ENCODE measurements at regions of chr1 and their contacts with region 1.

Region 1: DNA sequence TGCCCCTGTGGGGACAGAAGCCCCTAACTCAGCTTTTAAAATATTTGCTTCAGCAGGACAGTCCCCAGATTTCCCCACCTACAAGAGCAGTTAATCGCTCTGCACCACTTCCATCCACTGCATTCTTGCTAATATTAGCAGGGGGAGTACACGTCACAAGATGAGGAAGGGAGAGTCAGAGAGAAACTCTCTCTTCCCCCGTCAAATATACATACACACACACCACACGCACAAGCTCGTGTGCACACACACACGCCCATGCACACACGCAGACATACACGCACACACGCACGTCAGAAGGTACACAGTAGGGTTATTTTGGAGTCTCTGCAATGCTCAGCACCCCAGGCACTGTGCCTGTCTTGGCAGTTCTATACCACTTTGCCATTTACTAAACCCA is 2.1 kb downstream of the CLCA1 start:
- DNase-seq: no peak
- H3K4me3 Mint-ChIP-seq: no peak overlapping the region
- H3K27ac Mint-ChIP-seq: no peak overlapping the region
- H3K4me1 Mint-ChIP-seq: no peaks in the 10 kb centered on the region
- H3K27me3 Mint-ChIP-seq: no peaks in the 10 kb centered on the region
- CTCF ChIP-seq: no peak

Region 2: GRCh38 chr1:86289161-86289560 is 181.7 kb before region 1 on chr1:
- CTCF ChIA-PET with region 1: no interaction called
- POLR2A ChIA-PET with region 1: no interaction called
- intact Hi-C with region 1: no loop called
- DNase-seq: no peak
- H3K4me3 Mint-ChIP-seq: no peak overlapping the region
- H3K27ac Mint-ChIP-seq: no peak overlapping the region
- H3K4me1 Mint-ChIP-seq: no peaks in the 10 kb centered on the region
- H3K27me3 Mint-ChIP-seq: no peaks in the 10 kb centered on the region
- CTCF ChIP-seq: no peak

Region 3: DNA sequence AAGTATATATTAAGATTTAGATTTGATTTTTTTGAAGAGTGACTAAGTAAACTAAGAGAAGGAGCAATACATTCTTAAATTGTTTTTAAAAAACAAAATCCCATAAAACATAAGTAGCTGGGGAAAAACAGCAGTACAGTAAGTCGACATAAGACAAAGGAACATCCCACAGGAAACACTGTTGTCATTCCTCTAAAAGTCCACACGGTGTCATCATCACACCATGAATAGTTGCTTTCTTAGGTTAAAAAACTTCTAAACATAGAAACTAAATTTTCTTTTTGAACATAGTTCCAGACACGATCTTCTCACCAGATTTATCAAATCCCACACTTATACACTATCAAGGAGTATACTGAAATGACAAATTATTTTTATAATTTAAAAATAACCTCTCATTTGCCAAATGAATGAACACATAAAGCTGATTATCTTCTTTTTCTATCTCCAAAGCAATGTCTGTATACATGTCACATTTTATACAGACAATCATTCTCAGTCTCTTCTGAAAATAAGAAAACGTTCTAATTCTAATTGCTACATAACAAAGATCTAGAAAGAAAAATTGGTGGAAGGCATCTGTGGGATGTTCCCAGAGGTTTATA is 90.5 kb before region 1 on chr1:
- CTCF ChIA-PET with region 1: interaction called, 8 read pairs
- POLR2A ChIA-PET with region 1: no interaction called
- intact Hi-C with region 1: loop called (anchors 1 kb)
- DNase-seq: peak; percentile 73
- H3K4me3 Mint-ChIP-seq: no peak overlapping the region
- H3K27ac Mint-ChIP-seq: no peak overlapping the region
- H3K4me1 Mint-ChIP-seq: no peaks in the 10 kb centered on the region
- H3K27me3 Mint-ChIP-seq: no peaks in the 10 kb centered on the region
- CTCF ChIP-seq: peak; percentile 82

Region 4: GRCh38 chr1:86441581-86441980 is 29.3 kb before region 1 on chr1:
- CTCF ChIA-PET with region 1: interaction called, 11 read pairs
- POLR2A ChIA-PET with region 1: no interaction called
- intact Hi-C with region 1: no loop called
- DNase-seq: no peak
- H3K4me3 Mint-ChIP-seq: no peak overlapping the region
- H3K27ac Mint-ChIP-seq: no peak overlapping the region
- H3K4me1 Mint-ChIP-seq: no peaks in the 10 kb centered on the region
- H3K27me3 Mint-ChIP-seq: no peaks in the 10 kb centered on the region
- CTCF ChIP-seq: no peak

Region 5: DNA sequence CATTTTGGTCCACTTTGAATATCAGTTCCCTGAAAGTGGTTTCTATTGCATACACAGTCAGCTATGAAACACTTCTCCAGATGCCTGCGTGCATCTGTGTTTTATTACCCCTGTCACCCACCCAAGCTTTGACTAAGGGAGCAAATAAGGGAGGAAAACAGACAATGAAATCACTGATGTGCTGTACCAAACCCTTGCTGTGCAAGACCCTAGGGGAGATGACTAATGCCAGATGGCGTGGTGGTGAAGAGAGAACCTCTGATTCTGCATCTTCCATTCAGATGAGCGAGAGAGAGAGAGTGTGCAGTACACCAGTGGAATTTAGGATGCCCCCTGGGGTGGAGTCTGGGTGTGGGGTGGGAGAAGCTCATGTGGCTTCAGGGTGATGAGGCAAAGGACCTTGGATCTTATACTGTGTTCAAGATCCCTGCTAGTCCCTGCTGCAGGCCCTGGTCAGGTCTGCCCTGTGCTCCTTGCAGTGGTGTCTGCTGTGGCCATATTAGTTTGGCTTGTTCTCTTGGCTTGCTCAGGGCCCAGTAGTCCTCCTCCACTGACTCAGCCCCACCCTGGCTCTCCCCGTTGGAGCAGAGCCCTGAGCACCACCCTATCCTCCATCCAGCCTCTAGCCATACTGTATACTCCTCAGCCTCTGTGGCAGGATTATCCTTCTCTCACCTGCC is 16.4 kb after region 1 on chr1:
- CTCF ChIA-PET with region 1: interaction called, 45 read pairs
- POLR2A ChIA-PET with region 1: no interaction called
- intact Hi-C with region 1: no loop called
- DNase-seq: peak; percentile 18
- H3K4me3 Mint-ChIP-seq: no peak overlapping the region
- H3K27ac Mint-ChIP-seq: peak overlapping the region; percentile 21
- H3K4me1 Mint-ChIP-seq: no peaks in the 10 kb centered on the region
- H3K27me3 Mint-ChIP-seq: no peaks in the 10 kb centered on the region
- CTCF ChIP-seq: no peak

Region 6: GRCh38 chr1:86687595-86687994 is 216.7 kb after region 1 on chr1:
- CTCF ChIA-PET with region 1: interaction called, 16 read pairs
- POLR2A ChIA-PET with region 1: no interaction called
- intact Hi-C with region 1: loop called (anchors 10 kb)
- DNase-seq: peak; percentile 16
- H3K4me3 Mint-ChIP-seq: no peak overlapping the region
- H3K27ac Mint-ChIP-seq: no peak overlapping the region
- H3K4me1 Mint-ChIP-seq: no peaks in the 10 kb centered on the region
- H3K27me3 Mint-ChIP-seq: no peaks in the 10 kb centered on the region
- CTCF ChIP-seq: peak; percentile 39

Region 7: GRCh38 chr1:86965012-86965826 is 494.4 kb after region 1 on chr1:
- CTCF ChIA-PET with region 1: no interaction called
- POLR2A ChIA-PET with region 1: no interaction called
- intact Hi-C with region 1: no loop called
- DNase-seq: peak; percentile 48
- H3K4me3 Mint-ChIP-seq: no peak overlapping the region
- H3K27ac Mint-ChIP-seq: no peak overlapping the region
- H3K4me1 Mint-ChIP-seq: no peaks in the 10 kb centered on the region
- H3K27me3 Mint-ChIP-seq: no peaks in the 10 kb centered on the region
- CTCF ChIP-seq: peak; percentile 74

Measured in MCF 10A (cell line).